Activated T-helper 2 cell treated with anti-CD3 and anti-CD28 coated beads, Interferon-gamma antibody, Interleukin-2, Interleukin-4, amounts not matched to agents 10 μg/mL and 5 μg/mL and 100 μg/mL, durations not matched to agents 14 hours and 24 hours and 36 hours (primary cell): ENCODE measurements at regions of chr2 and their contacts with region 1.

Region 1: DNA sequence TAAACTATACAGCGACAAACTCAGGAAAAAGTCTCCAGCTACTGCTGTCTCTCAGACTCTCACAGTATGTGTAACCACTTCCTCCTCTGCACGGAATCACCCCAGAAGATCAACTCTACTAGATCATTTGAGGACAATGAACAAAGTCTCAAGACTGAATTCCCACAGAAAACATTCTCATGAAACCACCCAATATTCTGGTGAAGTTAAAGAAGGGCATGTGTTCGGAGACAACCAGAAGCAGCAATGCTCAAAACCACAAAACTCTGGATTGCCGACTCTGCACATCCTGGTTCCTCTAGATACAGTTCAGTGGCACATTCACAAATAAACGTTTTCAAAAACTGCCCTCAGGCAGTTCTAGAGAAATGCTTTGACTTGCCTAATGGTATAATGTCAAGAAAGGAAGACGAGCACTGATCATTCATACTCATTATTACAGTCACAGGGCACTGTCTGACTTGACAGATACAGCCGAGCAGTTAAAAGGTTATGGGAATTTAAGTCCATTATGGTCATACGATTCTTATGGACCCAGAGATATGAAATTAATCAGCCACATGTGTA is 91.9 kb upstream of the STK17B start:
- DNase-seq: peak; percentile 52
- H3K4me3 Mint-ChIP-seq: peak overlapping the region; percentile 72
- H3K27ac Mint-ChIP-seq: peak overlapping the region; percentile 94
- H3K4me1 Mint-ChIP-seq: peaks cover 68% of the 10 kb centered on the region
- H3K27me3 Mint-ChIP-seq: no peaks in the 10 kb centered on the region

Region 2: GRCh38 chr2:195656859-195657633 is 606.2 kb before region 1 on chr2 and contains the start of gene SLC39A10:
- intact Hi-C with region 1: loop called (anchors 2 kb)
- DNase-seq: peak; percentile 97
- H3K4me3 Mint-ChIP-seq: peak within 1 kb of the TSS; percentile 94
- H3K27ac Mint-ChIP-seq: peak within 1 kb of the TSS; percentile 100
- H3K4me1 Mint-ChIP-seq: peaks cover 25% of the 10 kb centered on the region
- H3K27me3 Mint-ChIP-seq: no peaks in the 10 kb centered on the region
- total RNA-seq, gene SLC39A10: 27.2 and 27.6 TPM in 2 replicates

Region 3: DNA sequence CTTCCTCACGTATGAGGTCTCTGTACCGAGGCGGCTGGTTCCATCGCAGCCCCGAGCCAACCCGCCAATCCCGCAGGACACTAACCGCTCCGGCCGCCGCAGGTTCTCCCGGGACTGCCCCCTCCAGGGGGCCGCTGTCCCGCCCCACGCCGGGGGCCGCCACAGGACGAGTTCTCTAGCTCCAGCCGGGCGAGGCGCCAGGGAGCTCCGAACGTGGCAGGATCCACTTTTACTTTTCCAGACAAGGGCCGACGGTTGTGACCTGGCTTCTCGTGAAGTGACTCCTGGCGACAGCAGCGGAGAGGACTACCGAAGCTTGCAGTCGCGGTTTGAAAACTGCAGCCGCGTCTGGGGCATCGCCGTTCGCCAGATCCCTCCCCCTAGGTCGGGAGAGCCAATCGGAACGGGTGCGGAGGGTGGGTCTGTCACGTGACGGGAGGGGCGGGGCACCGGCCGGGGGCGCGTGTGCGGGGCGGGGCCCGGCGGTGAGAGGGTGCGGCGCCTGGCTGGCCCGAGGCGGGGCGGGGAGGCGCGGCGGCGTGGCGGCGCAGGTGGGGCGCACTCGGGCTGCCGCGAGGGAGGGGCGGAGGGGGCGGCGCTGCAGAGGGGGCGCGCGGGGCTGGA is 91.9 kb before region 1 on chr2 and contains the start of gene STK17B:
- intact Hi-C with region 1: loop called (anchors 2 kb)
- DNase-seq: peak; percentile 94
- H3K4me3 Mint-ChIP-seq: peak within 1 kb of the TSS; percentile 96
- H3K27ac Mint-ChIP-seq: peak within 1 kb of the TSS; percentile 93
- H3K4me1 Mint-ChIP-seq: peaks cover 44% of the 10 kb centered on the region
- H3K27me3 Mint-ChIP-seq: no peaks in the 10 kb centered on the region
- total RNA-seq, gene STK17B: 176 and 178 TPM in 2 replicates

Region 4: GRCh38 chr2:196233805-196234475 is 29.3 kb before region 1 on chr2:
- intact Hi-C with region 1: loop called (anchors 1 kb)
- DNase-seq: no peak
- H3K4me3 Mint-ChIP-seq: no peak overlapping the region
- H3K27ac Mint-ChIP-seq: peak overlapping the region; percentile 62
- H3K4me1 Mint-ChIP-seq: peaks cover 79% of the 10 kb centered on the region
- H3K27me3 Mint-ChIP-seq: no peaks in the 10 kb centered on the region

Region 5: GRCh38 chr2:196252408-196253115 is 10.7 kb before region 1 on chr2:
- intact Hi-C with region 1: loop called (anchors 1 kb)
- DNase-seq: no peak
- H3K4me3 Mint-ChIP-seq: no peak overlapping the region
- H3K27ac Mint-ChIP-seq: peak overlapping the region; percentile 71
- H3K4me1 Mint-ChIP-seq: peaks cover 61% of the 10 kb centered on the region
- H3K27me3 Mint-ChIP-seq: no peaks in the 10 kb centered on the region

Region 6: DNA sequence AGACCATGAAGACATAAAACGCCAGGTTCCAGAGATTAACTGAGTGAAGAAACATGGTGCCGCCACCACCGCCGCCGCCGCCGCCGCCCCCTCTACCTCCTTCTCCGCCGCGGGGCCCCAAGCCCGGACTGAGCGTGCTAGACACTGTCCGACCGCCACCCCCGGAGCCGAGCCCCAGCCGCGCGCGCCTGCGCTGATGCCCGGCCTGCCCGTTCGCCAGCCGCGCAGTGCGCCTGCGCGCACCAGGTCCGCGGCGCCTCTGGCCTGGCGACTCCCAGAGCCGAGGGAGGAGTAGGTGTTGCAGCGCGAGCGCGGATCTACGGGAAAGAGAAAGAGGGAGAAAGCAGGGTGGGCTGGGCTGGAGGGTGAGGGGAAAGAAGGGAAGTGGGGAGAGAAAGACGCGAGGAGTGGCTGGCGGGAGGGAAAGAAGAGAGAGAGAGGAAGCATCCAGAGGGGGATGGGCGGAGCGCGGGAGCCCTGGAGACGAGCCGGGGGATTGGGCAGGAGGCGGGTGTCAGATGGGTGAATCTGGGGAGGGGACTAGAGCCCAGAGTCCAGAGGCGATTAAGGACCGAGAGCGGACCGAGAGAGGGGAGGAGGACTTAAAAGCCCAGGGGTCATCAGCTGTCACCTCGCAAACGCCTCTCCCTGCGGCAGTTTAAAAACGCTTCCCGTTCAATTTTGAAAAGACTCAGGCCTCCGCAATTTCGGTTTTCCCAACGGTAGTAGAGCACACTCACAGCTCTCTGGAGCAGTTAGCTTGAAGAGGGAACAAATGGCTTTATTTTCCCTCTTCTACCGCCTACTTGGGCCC is 663.5 kb after region 1 on chr2 and contains the start of gene PGAP1:
- intact Hi-C with region 1: loop called (anchors 10 kb)
- DNase-seq: peak; percentile 84
- H3K4me3 Mint-ChIP-seq: peak within 1 kb of the TSS; percentile 100
- H3K27ac Mint-ChIP-seq: peak within 1 kb of the TSS; percentile 99
- H3K4me1 Mint-ChIP-seq: peaks cover 35% of the 10 kb centered on the region
- H3K27me3 Mint-ChIP-seq: no peaks in the 10 kb centered on the region
- total RNA-seq, gene PGAP1: 31.2 and 31.4 TPM in 2 replicates